ENCODE measurements at regions of chr7 and their contacts with region 1.

Region 1: GRCh38 chr7:122736183-122736582 is 33.5 kb upstream of the RNF148 start:
- DNase-seq: no peak
- CTCF ChIP-seq: no peak

Region 2: GRCh38 chr7:122748195-122748594 is 12.0 kb after region 1 on chr7:
- CTCF ChIA-PET with region 1: interaction called, 11 read pairs
- POLR2A ChIA-PET with region 1: no interaction called
- DNase-seq: no peak
- CTCF ChIP-seq: no peak

Measured in GM10248 (cell line).